Mammary epithelial cell (primary cell): ENCODE measurements at regions of chr10 and their contacts with region 1.

Region 1: DNA sequence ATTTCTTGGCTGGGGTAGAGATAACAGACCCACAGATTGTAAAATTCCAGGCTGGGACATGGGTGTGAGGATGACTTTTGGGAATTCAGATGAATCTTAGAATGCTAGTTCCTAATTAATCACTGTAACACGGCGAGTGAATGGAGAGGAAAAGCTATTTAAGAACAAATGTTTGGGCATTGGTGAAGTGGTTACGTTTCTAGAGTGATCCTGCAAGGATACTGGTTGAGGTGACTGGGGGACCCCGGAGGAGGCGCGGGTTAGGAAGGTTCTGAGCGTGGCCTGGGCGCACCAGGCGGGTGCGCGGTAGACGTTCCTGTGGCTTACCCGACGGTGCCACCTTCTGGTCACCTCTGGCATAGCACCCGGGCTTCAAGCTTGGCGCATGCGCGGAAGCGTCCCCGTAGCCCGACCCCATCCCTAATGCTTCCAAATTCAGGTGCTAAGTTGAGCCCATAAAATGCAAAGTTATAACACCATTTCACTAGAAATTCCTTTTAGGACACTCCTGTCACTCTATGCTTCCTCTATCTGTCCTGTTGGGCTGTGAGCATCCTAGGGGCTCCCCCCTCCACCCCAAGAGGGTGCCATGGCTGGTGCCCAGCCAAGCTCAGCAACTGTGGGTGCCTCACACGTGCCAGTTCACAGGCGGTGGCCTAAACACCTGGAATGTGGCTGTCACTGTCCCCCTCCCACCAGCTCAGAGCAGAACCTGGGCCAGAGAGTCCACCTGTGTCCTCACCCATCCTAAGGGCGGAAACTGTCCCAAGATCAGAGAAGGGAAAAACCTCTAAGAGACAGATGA is 104.5 kb downstream of the PTPRE start:
- DNase-seq: peak; percentile 40
- H3K4me3 ChIP-seq: no peak overlapping the region
- H3K27ac ChIP-seq: no peak overlapping the region
- H3K4me1 ChIP-seq: no peaks in the 10 kb centered on the region
- H3K27me3 ChIP-seq: no peaks in the 10 kb centered on the region
- CTCF ChIP-seq: peak; percentile 95 to 100

Region 2: DNA sequence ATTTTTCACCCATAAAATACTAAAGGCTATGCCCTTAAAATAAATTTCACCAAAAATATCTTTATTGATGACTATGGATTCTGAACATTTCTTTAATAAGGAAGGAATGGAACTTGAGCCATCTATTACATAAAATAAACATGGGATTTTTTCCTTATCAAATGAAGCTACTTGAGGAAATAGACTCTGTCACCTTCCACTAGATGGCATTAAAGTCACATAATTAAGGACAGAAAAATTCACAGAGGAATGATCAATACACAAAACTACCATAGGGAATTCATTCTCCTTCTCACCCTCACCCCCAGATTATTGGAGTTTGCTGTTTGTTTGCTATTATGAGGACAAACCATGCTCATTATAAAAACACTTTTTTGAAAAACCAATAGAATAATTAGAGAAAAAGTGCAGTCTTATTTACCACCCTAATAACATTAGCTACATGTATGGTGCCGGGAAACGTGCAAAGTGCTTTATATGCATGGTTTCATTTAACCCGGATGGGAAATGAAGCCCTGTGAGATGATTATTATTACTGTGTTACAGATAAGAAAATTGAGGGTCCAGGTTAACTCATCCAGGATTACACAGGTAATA is 295.5 kb before region 1 on chr10:
- CTCF ChIA-PET with region 1: no interaction called
- dilution Hi-C with region 1: no loop called
- in situ Hi-C with region 1: no loop called
- intact Hi-C with region 1: loop called (anchors 1 kb)
- DNase-seq: no peak
- H3K4me3 ChIP-seq: no peak overlapping the region
- H3K27ac ChIP-seq: no peak overlapping the region
- H3K4me1 ChIP-seq: no peaks in the 10 kb centered on the region
- H3K27me3 ChIP-seq: no peaks in the 10 kb centered on the region
- CTCF ChIP-seq: peak; percentile 22 to 45

Region 3: DNA sequence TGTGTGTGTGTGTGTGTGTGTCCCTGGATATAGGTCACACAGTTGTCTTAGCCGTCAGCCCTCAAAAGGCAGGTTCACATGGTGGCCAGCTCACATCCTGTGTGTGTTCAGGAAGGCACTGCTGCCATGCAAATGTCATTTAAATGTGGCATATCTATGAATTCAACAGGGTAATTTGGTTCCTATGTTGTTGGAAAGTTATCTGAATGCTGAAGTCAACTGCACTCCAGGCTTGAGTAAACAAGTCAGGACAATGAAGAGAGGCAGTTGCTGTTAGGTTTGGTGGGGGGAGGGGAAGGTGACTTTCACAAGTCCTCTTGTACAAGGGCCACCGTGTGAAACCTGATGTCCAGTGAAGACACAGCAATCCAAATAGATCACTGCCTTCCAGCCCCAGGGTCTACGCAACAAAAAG is 43.3 kb before region 1 on chr10:
- CTCF ChIA-PET with region 1: no interaction called
- dilution Hi-C with region 1: no loop called
- in situ Hi-C with region 1: no loop called
- intact Hi-C with region 1: no loop called
- DNase-seq: no peak
- H3K4me3 ChIP-seq: no peak overlapping the region
- H3K27ac ChIP-seq: no peak overlapping the region
- H3K4me1 ChIP-seq: peaks cover 6% of the 10 kb centered on the region
- H3K27me3 ChIP-seq: no peaks in the 10 kb centered on the region
- CTCF ChIP-seq: no peak

Region 4: GRCh38 chr10:127990846-127991542 is 20.4 kb before region 1 on chr10:
- CTCF ChIA-PET with region 1: no interaction called
- dilution Hi-C with region 1: no loop called
- in situ Hi-C with region 1: no loop called
- intact Hi-C with region 1: loop called (anchors 1 kb)
- DNase-seq: peak; percentile 91
- H3K4me3 ChIP-seq: no peak overlapping the region
- H3K27ac ChIP-seq: peak overlapping the region; percentile 76
- H3K4me1 ChIP-seq: peaks cover 39% of the 10 kb centered on the region
- H3K27me3 ChIP-seq: no peaks in the 10 kb centered on the region
- CTCF ChIP-seq: no peak

Region 5: GRCh38 chr10:128064108-128064969 is 53.0 kb after region 1 on chr10:
- CTCF ChIA-PET with region 1: no interaction called
- dilution Hi-C with region 1: loop called (anchors 5 kb)
- in situ Hi-C with region 1: no loop called
- intact Hi-C with region 1: loop called (anchors 1 kb)
- DNase-seq: peak; percentile 97
- H3K4me3 ChIP-seq: no peak overlapping the region
- H3K27ac ChIP-seq: peak overlapping the region; percentile 97
- H3K4me1 ChIP-seq: peaks cover 46% of the 10 kb centered on the region
- H3K27me3 ChIP-seq: no peaks in the 10 kb centered on the region
- CTCF ChIP-seq: no peak

Region 6: GRCh38 chr10:128069351-128070051 is 58.1 kb after region 1 on chr10:
- CTCF ChIA-PET with region 1: no interaction called
- dilution Hi-C with region 1: loop called (anchors 5 kb)
- in situ Hi-C with region 1: no loop called
- intact Hi-C with region 1: loop called (anchors 1 kb)
- DNase-seq: peak; percentile 85
- H3K4me3 ChIP-seq: no peak overlapping the region
- H3K27ac ChIP-seq: no peak overlapping the region
- H3K4me1 ChIP-seq: peaks cover 33% of the 10 kb centered on the region
- H3K27me3 ChIP-seq: no peaks in the 10 kb centered on the region
- CTCF ChIP-seq: peak; percentile 74 to 84